Activated CD8-positive, alpha-beta T cell treated with anti-CD3 and anti-CD28 coated beads for 36 hours (primary cell): ENCODE measurements at regions of chr1 and their contacts with region 1.

Region 1: DNA sequence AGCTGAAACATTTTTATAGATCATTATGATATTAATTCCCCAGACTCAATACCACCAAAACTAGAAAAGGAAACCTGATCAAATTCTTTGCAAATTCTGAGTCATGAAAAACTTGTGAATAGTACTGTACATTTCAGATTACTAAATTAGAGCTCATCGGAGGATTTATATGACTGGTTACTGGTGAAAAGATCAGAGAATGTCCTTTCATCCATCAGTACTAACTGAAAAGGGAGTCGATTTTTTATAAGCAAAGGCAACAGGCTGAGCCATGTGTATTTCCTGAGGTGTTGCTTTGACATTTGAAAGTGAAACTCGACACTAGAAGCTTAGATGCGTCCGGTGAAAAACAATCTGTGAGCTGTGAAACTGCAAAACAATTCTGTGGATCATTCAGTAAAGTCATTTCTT is 155.7 kb downstream of the TNFSF18 start:
- DNase-seq: peak; percentile 48
- ATAC-seq: peak; percentile 82
- H3K4me3 Mint-ChIP-seq: peak overlapping the region; percentile 64
- H3K27ac Mint-ChIP-seq: peak overlapping the region; percentile 44
- H3K4me1 Mint-ChIP-seq: peaks cover 48% of the 10 kb centered on the region
- H3K27me3 Mint-ChIP-seq: no peaks in the 10 kb centered on the region
- CTCF ChIP-seq: no peak

Region 2: GRCh38 chr1:172638885-172639831 is 255.9 kb before region 1 on chr1:
- CTCF ChIA-PET with region 1: no interaction called
- POLR2A ChIA-PET with region 1: no interaction called
- intact Hi-C with region 1: loop called (anchors 10 kb)
- DNase-seq: peak; percentile 94
- ATAC-seq: peak; percentile 75
- H3K4me3 Mint-ChIP-seq: peak overlapping the region; percentile 49
- H3K27ac Mint-ChIP-seq: peak overlapping the region; percentile 98
- H3K4me1 Mint-ChIP-seq: peaks cover 72% of the 10 kb centered on the region
- H3K27me3 Mint-ChIP-seq: no peaks in the 10 kb centered on the region
- CTCF ChIP-seq: no peak

Region 3: GRCh38 chr1:172837816-172838680 is 57.0 kb before region 1 on chr1:
- CTCF ChIA-PET with region 1: interaction called, 3 read pairs
- POLR2A ChIA-PET with region 1: interaction called, 10 read pairs
- intact Hi-C with region 1: loop called (anchors 5 kb)
- DNase-seq: peak; percentile 41
- ATAC-seq: peak; percentile 97
- H3K4me3 Mint-ChIP-seq: no peak overlapping the region
- H3K27ac Mint-ChIP-seq: no peak overlapping the region
- H3K4me1 Mint-ChIP-seq: peaks cover 34% of the 10 kb centered on the region
- H3K27me3 Mint-ChIP-seq: peaks cover 18% of the 10 kb centered on the region
- CTCF ChIP-seq: no peak

Region 4: DNA sequence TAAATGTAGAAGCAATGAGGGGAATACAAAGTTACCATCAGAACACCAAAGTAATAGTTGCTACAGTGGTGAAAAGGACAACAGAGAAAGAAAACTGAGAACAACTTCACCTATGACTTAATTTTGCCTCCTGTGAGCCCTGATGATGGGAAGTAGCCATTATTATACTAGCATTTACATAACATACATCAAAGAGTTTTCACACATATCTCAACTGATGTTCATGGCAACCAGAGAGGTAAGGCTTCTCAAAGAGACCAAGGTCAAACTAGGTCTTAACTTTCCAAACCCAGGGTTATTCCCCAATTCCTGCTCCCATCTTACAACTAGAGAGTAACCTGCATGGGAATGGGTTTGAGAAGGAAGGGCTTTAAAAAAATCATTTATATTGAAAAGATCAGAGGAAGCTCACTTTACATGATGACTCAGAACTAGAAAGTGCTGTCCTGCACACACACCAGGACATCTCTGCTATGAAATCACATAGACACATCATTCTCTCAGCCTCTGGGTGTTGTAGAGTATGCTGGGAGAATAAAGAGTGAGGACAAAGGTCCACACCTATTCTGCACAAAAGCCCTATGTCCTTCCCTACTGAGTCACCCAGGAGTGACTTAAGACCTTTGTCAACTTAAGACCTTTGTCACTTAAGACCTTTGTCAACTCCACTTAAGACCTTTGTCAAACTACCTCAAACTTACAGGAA is 24.0 kb before region 1 on chr1:
- CTCF ChIA-PET with region 1: no interaction called
- POLR2A ChIA-PET with region 1: no interaction called
- intact Hi-C with region 1: loop called (anchors 2 kb)
- DNase-seq: peak; percentile 35
- ATAC-seq: peak; percentile 74
- H3K4me3 Mint-ChIP-seq: no peak overlapping the region
- H3K27ac Mint-ChIP-seq: no peak overlapping the region
- H3K4me1 Mint-ChIP-seq: peaks cover 43% of the 10 kb centered on the region
- H3K27me3 Mint-ChIP-seq: peaks cover 1% of the 10 kb centered on the region
- CTCF ChIP-seq: no peak

Region 5: DNA sequence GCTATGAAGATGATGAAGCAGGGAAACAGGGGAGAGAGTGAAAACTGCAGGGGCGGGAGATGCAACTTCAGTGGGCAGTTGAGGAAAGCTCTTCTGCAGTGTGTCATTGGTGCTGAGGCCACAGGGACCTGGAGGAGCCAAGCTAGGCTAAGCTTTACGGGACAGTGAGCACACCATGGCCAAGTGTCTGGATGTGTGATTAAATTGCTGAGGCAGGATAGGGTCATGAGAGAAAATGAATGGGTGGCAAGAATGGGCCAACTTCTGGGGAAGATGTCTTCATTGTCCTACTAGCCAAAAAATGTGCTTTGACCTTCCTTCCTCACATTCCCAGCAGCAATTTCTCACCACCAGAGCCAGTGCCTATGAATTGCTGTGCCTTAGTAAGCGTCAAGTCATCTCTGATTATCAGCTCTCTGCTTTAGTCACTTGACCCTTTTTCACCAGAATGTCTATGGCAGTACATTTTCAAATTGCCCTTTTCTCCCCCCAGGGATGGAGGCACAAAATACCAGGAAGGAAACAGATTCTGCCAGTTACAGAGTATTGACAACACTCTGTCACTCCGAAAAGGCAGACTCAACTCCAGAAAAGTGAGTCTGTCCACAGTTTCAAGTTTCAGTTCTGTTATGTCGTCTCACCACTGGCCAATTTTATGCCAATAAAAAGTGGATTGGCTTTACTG is 11.8 kb before region 1 on chr1:
- CTCF ChIA-PET with region 1: interaction called, 3 read pairs
- POLR2A ChIA-PET with region 1: interaction called, 17 read pairs
- intact Hi-C with region 1: no loop called
- DNase-seq: peak; percentile 40
- ATAC-seq: peak; percentile 83
- H3K4me3 Mint-ChIP-seq: no peak overlapping the region
- H3K27ac Mint-ChIP-seq: no peak overlapping the region
- H3K4me1 Mint-ChIP-seq: peaks cover 16% of the 10 kb centered on the region
- H3K27me3 Mint-ChIP-seq: peaks cover 16% of the 10 kb centered on the region
- CTCF ChIP-seq: no peak

Region 6: GRCh38 chr1:172914501-172915144 is 19.6 kb after region 1 on chr1:
- CTCF ChIA-PET with region 1: no interaction called
- POLR2A ChIA-PET with region 1: no interaction called
- intact Hi-C with region 1: no loop called
- DNase-seq: no peak
- ATAC-seq: no peak
- H3K4me3 Mint-ChIP-seq: no peak overlapping the region
- H3K27ac Mint-ChIP-seq: no peak overlapping the region
- H3K4me1 Mint-ChIP-seq: no peaks in the 10 kb centered on the region
- H3K27me3 Mint-ChIP-seq: no peaks in the 10 kb centered on the region
- CTCF ChIP-seq: no peak

Region 7: DNA sequence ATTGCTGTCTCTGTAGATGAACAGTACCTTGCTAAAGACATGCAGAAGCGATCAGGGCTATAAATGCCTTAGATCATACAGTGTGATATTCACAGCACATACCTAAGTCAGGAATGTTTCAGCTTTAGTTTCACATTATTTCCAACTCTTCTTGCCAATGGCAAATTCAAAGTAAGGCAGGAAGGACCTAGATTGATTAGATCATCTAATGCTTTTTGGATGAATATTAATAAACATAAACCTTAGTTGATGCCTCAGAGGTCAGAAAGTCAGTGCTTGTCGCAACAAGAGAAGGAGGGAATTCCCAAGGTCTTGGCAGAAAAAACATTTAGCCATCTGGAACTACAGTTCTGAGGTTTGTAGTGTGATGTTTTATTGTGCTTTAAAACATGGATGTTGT is 33.4 kb after region 1 on chr1:
- CTCF ChIA-PET with region 1: no interaction called
- POLR2A ChIA-PET with region 1: no interaction called
- intact Hi-C with region 1: no loop called
- DNase-seq: no peak
- ATAC-seq: no peak
- H3K4me3 Mint-ChIP-seq: no peak overlapping the region
- H3K27ac Mint-ChIP-seq: no peak overlapping the region
- H3K4me1 Mint-ChIP-seq: peaks cover 8% of the 10 kb centered on the region
- H3K27me3 Mint-ChIP-seq: no peaks in the 10 kb centered on the region
- CTCF ChIP-seq: no peak

Region 8: GRCh38 chr1:172938676-172939075 is 43.6 kb after region 1 on chr1:
- CTCF ChIA-PET with region 1: no interaction called
- POLR2A ChIA-PET with region 1: no interaction called
- intact Hi-C with region 1: no loop called
- DNase-seq: no peak
- ATAC-seq: no peak
- H3K4me3 Mint-ChIP-seq: no peak overlapping the region
- H3K27ac Mint-ChIP-seq: no peak overlapping the region
- H3K4me1 Mint-ChIP-seq: peaks cover 10% of the 10 kb centered on the region
- H3K27me3 Mint-ChIP-seq: no peaks in the 10 kb centered on the region
- CTCF ChIP-seq: no peak

Region 9: GRCh38 chr1:173190101-173190906 is 295.2 kb after region 1 on chr1:
- CTCF ChIA-PET with region 1: no interaction called
- POLR2A ChIA-PET with region 1: no interaction called
- intact Hi-C with region 1: loop called (anchors 10 kb)
- DNase-seq: peak; percentile 16
- ATAC-seq: no peak
- H3K4me3 Mint-ChIP-seq: no peak overlapping the region
- H3K27ac Mint-ChIP-seq: no peak overlapping the region
- H3K4me1 Mint-ChIP-seq: peaks cover 8% of the 10 kb centered on the region
- H3K27me3 Mint-ChIP-seq: no peaks in the 10 kb centered on the region
- CTCF ChIP-seq: no peak